ENCODE measurements at regions of chr3 and their contacts with region 1.

Region 1: GRCh38 chr3:64030741-64031140 is 7.4 kb upstream of the PSMD6 start:
- DNase-seq: peak; percentile 76
- ATAC-seq: peak; percentile 94
- H3K4me3 Mint-ChIP-seq: peak overlapping the region; percentile 65
- H3K27ac Mint-ChIP-seq: no peak overlapping the region
- H3K4me1 Mint-ChIP-seq: peaks cover 13% of the 10 kb centered on the region
- H3K27me3 Mint-ChIP-seq: peaks cover 49% of the 10 kb centered on the region

Region 2: DNA sequence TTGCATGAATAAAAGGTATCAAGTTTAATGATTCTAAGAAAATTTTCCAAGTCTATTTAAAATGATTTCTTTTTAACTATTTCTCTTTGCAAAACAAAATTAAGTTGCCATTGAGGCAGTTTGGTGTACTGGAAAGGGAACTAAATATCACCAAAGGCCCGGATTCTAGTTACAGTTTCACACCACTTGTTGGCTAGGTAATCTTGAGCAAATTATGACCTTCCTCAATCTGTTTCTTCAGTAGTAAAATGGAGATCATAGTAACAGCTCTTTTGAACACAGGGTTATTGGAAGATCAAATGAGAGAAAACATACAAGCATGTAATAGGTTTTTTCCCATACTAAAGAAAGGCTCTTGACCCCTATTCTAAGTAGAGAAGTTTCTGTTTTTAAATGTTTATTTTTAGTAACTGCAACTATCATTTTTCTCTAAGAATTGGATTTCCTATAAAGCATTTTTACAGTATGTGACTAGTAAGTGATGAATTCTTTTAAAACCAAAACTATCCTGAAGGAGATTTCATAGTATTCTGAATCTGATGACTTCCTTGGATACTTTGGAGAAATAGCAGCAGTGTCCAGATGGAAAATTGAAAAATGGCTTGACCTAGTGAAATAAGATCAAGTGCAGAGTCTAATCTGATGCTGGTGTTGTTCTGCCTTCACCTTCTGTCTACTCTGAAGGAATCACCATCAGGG is 134.3 kb before region 1 on chr3:
- CTCF ChIA-PET with region 1: no interaction called
- DNase-seq: no peak
- ATAC-seq: no peak
- H3K4me3 Mint-ChIP-seq: no peak overlapping the region
- H3K27ac Mint-ChIP-seq: no peak overlapping the region
- H3K4me1 Mint-ChIP-seq: peaks cover 37% of the 10 kb centered on the region
- H3K27me3 Mint-ChIP-seq: no peaks in the 10 kb centered on the region

Region 3: DNA sequence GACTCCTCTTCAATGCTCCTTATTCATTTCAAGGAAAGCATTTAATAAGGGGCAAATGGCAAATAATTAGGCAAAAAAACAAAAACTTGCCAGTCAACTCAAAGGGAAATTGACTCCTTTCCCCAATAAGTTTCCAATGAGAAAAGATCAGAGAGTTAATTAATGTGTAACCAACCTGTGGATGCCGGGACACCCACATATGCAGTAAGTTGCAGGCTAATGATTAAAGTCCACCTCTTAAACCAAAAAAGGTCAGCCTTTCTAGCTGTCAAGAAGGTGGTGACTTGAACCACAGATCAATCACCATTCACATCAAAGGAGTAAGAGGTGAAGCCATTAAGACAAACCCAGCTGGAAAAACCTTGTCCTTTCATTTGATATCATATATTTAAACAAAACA is 217.5 kb after region 1 on chr3:
- CTCF ChIA-PET with region 1: no interaction called
- DNase-seq: no peak
- ATAC-seq: no peak
- H3K4me3 Mint-ChIP-seq: no peak overlapping the region
- H3K27ac Mint-ChIP-seq: no peak overlapping the region
- H3K4me1 Mint-ChIP-seq: no peaks in the 10 kb centered on the region
- H3K27me3 Mint-ChIP-seq: no peaks in the 10 kb centered on the region

Region 4: GRCh38 chr3:64484289-64484992 is 453.7 kb after region 1 on chr3:
- CTCF ChIA-PET with region 1: interaction called, 20 read pairs
- DNase-seq: peak; percentile 80
- ATAC-seq: peak; percentile 94
- H3K4me3 Mint-ChIP-seq: no peak overlapping the region
- H3K27ac Mint-ChIP-seq: no peak overlapping the region
- H3K4me1 Mint-ChIP-seq: no peaks in the 10 kb centered on the region
- H3K27me3 Mint-ChIP-seq: peaks cover 22% of the 10 kb centered on the region